H1 (cell line): ENCODE measurements at regions of chr3 and their contacts with region 1.

Region 1: DNA sequence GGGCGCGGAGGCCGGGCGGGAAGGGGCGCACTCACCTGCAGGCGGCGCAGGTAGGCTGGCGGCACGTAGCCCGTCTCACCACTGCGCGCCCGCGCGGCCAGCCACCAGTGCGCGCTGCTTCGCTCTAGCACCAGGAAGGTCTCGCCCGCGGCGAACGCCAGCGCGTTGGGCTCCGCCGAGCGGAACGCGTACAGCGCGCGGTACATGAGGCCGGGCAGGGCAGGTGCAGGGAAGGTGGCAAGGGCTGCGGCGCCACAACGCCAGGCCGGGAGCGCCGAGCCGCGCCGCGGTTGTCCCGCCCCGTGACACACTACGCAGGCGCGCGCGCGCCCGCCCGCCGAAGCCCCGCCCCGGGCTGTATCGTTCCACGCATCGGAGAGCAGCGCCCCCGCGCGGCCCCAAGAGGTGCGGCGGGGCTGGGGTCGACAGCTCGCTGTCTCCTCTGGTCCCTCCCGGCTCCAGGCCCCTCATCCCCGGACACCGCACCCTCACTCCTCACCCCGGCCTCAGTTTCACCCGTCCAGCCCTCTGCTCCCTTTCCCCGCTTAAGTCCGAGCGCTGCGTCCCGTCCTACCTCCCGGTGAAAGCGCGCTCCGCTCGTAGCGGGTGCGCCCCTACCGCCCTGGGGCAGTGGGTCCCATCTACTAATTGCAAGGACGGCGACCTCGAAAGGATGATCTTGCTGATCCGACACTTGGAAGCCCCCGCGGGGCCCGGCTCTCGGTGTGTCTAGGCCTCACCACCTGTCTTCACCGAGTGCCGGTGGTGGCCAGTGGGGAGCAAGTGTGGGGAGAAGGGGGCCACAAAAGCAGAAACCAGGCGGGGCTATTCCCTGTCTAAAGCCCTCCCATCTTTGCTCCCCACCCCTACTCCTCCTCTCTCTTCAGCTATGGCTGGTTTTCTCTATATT is at the start of gene NCKIPSD:
- DNase-seq: peak in 1 of 2 experiments; percentile 98
- H3K4me3 ChIP-seq: peak within 1 kb of the TSS; percentile 81 to 94 (median 86)
- H3K27ac ChIP-seq: peak within 1 kb of the TSS; percentile 94
- H3K4me1 ChIP-seq: peaks cover 0 to 11% (median 4%) of the 10 kb centered on the region in 4 experiments; a peak in 3 of 7 replicates
- H3K27me3 ChIP-seq: no peaks in the 10 kb centered on the region
- CTCF ChIP-seq: peak in 2 of 3 experiments; percentile 77 to 90; a peak in 3 of 4 replicates
- EP300 ChIP-seq: no peak
- POLR2A ChIP-seq: peak in 1 of 2 experiments; percentile 86; a peak in 2 of 3 replicates
- RAD21 ChIP-seq: peak; percentile 49 to 62
- total RNA-seq, gene NCKIPSD: 31.7 and 34.7 TPM in 2 replicates

Region 2: GRCh38 chr3:48674505-48674904 is 11.4 kb before region 1 on chr3:
- CTCF ChIA-PET with region 1: interaction called, 16 read pairs
- POLR2A ChIA-PET with region 1: interaction called, 175 read pairs
- DNase-seq: no peak
- H3K4me3 ChIP-seq: no peak overlapping the region
- H3K27ac ChIP-seq: no peak overlapping the region
- H3K4me1 ChIP-seq: no peaks in the 10 kb centered on the region
- H3K27me3 ChIP-seq: no peaks in the 10 kb centered on the region
- CTCF ChIP-seq: no peak
- EP300 ChIP-seq: no peak
- POLR2A ChIP-seq: no peak
- RAD21 ChIP-seq: no peak

Region 3: DNA sequence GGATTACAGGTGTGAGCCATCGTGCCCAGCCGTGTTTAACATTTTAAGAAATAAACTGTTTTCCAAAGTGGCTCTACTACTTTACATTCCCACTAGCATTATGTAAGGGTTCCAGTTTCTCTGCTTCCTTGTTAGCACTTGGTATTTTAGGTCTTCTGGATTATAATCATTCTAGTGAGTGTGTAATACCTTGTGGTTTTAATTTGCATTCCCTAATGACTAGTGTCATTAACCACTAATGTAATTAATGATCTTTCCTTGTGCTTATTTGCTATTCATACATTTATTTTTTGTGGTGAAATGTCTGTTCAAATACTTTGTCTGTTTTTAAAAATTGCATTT is 263.5 kb after region 1 on chr3:
- CTCF ChIA-PET with region 1: no interaction called
- POLR2A ChIA-PET with region 1: no interaction called
- DNase-seq: no peak
- H3K4me3 ChIP-seq: no peak overlapping the region
- H3K27ac ChIP-seq: no peak overlapping the region
- H3K4me1 ChIP-seq: peaks cover 0 to 7% (median 0%) of the 10 kb centered on the region in 4 experiments; a peak in 2 of 7 replicates
- H3K27me3 ChIP-seq: no peaks in the 10 kb centered on the region
- CTCF ChIP-seq: no peak
- EP300 ChIP-seq: no peak
- POLR2A ChIP-seq: no peak
- RAD21 ChIP-seq: no peak